ENCODE measurements at regions of chr7 and their contacts with region 1.

Region 1: DNA sequence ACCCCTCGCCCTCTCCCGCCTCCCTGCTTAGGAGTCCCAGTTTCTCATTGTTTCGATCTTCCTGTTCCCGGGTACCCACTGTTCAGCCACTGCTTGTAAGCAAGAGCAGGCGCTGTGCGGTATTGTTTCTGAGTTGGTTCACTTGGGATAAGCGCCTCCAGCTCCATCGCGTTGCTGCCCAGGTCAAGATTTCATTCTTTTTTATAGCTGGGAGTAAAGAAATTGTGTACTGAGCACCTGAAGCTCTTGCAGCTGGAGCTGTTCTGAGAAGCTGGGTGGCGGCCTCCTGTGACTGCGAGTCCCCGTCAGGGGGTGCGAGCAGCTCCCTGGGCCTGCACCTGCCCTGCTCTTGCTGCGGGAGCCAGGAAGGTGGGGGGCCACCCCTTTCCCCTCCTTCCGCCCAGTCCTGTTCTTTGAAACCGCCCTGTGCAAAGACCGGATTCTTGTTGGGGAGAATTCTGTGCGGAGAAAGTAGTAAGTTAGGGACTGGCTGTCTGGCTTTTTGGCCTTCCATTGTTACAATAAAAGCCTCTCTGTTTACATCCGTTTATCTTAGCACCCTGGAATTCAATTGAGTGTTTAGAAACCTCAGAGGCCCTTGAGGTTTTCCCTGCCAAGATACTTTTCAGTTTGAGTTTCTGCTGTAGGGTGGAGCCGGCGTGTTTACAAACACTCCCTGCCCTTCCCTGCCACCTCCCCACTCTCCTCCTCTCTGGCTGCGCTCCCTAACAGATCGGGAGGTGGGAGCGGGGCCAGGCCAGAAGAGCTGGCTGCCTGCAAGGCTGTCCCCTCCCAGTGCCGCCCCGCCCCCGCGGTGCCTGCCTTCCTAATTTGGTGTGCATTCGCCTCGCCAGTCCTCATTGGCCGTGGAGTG is 30.8 kb upstream of the AP5Z1 start:
- DNase-seq: peak; percentile 99 to 100
- ATAC-seq: peak; percentile 93 to 96 (median 94)
- H3K4me3 ChIP-seq: peak overlapping the region; percentile 48
- H3K27ac ChIP-seq: peak overlapping the region; percentile 92
- H3K4me1 ChIP-seq: peaks cover 29% of the 10 kb centered on the region
- H3K27me3 ChIP-seq: no peaks in the 10 kb centered on the region
- CTCF ChIP-seq: no peak

Region 2: GRCh38 chr7:4216016-4216415 is 528.6 kb before region 1 on chr7:
- intact Hi-C with region 1: no loop called
- DNase-seq: no peak
- ATAC-seq: no peak
- H3K4me3 ChIP-seq: no peak overlapping the region
- H3K27ac ChIP-seq: no peak overlapping the region
- H3K4me1 ChIP-seq: no peaks in the 10 kb centered on the region
- H3K27me3 ChIP-seq: no peaks in the 10 kb centered on the region
- CTCF ChIP-seq: no peak

Region 3: GRCh38 chr7:4561795-4562194 is 182.8 kb before region 1 on chr7:
- intact Hi-C with region 1: no loop called
- DNase-seq: no peak
- ATAC-seq: no peak
- H3K4me3 ChIP-seq: no peak overlapping the region
- H3K27ac ChIP-seq: no peak overlapping the region
- H3K4me1 ChIP-seq: no peaks in the 10 kb centered on the region
- H3K27me3 ChIP-seq: peaks cover 0 to 5% (median 2%) of the 10 kb centered on the region in 3 donors
- CTCF ChIP-seq: no peak

Region 4: DNA sequence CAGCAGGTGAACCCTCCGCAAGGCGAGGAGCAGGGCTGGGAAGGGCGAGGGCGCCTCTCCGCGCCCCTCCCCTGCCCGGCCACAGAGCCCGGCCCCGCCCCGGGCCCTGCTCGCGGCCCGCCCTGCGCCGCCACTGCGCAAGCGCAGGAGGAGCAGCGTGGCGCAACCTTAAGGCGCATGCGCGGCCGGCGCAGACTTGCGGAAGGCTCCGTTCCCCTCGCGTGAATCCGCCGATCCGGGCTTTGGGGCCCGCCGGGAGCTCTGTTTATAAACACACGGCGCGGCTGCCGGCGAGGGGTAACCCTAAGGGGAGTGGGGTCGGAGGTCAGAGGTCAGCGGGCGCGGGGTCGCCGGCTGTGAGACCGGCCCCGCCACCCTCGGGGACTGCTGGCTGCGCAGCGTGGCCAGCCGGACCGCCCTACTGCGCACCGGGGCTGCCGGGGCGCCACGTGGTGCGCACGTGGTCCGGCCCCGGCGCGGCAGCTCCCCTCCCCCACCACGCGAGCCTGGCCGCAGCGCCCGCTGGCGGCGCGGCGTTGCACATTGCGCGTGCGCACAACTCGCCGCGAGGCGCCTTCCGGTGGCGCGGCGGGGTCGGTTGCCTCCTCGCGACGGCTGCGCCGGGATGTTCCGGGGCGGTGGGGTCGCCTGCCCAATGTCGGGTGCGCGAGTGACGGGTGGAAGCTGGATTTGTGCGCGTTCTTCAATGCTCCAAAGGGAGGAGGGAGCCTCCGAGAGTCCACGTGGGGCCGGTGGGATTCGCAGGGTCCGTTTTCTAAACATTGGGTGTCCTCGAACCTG is 102.8 kb before region 1 on chr7:
- intact Hi-C with region 1: loop called in 1 of 2 experiments (anchors 5 kb)
- DNase-seq: peak; percentile 95 to 98
- ATAC-seq: peak; percentile 95 to 96 (median 96)
- H3K4me3 ChIP-seq: peak overlapping the region; percentile 81
- H3K27ac ChIP-seq: peak overlapping the region; percentile 94
- H3K4me1 ChIP-seq: peaks cover 5% of the 10 kb centered on the region
- H3K27me3 ChIP-seq: no peaks in the 10 kb centered on the region
- CTCF ChIP-seq: peak; percentile 44

Region 5: DNA sequence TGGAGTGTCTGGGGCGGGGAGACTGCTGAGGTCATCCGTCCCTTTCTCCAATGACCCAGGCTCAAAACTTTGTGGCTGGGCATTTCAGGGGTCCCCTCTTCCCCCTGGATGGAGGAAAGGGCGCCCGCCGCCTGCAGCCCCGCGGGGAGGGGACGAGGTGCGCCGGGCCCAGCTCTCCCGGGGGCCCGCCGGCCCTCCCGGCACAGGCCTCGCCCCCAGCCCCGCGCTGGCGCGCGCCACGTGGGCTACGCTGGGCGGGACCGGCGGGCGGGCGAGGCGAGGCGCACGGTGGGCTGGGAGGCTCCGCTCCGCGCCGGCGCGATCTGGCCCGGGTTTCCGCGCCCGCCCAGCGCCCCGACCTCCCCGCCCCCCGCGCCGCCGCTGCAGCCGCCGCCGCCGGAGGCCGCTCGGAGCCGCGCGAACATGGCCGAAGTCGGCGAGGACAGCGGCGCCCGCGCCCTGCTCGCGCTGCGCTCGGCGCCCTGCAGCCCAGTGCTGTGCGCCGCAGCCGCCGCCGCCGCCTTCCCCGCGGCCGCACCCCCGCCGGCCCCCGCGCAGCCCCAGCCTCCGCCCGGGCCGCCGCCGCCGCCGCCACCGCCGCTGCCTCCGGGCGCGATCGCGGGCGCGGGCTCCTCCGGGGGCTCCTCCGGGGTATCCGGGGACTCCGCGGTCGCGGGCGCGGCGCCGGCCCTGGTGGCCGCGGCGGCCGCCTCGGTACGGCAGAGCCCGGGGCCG is 62.6 kb before region 1 on chr7 and contains the start of gene FOXK1:
- intact Hi-C with region 1: loop called in 1 of 2 experiments (anchors 2 kb)
- DNase-seq: peak; percentile 82 to 88
- ATAC-seq: peak; percentile 78 to 89 (median 82)
- H3K4me3 ChIP-seq: peak within 1 kb of the TSS; percentile 95
- H3K27ac ChIP-seq: peak within 1 kb of the TSS; percentile 84
- H3K4me1 ChIP-seq: peaks cover 31% of the 10 kb centered on the region
- H3K27me3 ChIP-seq: no peaks in the 10 kb centered on the region
- CTCF ChIP-seq: no peak
- total RNA-seq, gene FOXK1: 16.8 to 26.4 (median 21.5) TPM

Region 6: DNA sequence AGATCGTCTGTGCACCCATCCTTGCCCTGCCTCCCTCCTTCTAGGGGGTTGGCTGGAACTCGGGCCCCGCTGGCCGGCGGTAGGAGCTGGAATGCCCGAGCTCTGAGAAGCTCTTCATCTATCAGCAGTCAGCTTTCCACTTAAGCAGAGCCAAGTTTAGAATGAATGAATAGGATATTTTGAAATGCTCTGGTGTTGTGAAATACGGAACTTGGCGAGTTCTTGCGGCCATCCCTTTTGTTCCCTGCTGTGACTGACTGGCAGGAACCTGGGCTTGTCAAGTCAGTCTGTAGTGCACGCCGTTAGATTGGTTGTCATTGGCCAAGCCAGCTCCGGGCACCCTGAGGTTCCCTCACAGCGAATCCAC is 29.2 kb before region 1 on chr7:
- intact Hi-C with region 1: loop called in 1 of 2 experiments (anchors 2 kb)
- DNase-seq: peak; percentile 69 to 85
- ATAC-seq: peak; percentile 85 to 92 (median 88)
- H3K4me3 ChIP-seq: peak overlapping the region; percentile 54
- H3K27ac ChIP-seq: peak overlapping the region; percentile 86
- H3K4me1 ChIP-seq: peaks cover 32% of the 10 kb centered on the region
- H3K27me3 ChIP-seq: no peaks in the 10 kb centered on the region
- CTCF ChIP-seq: no peak